ENCODE measurements at regions of chr7 and their contacts with region 1.

Region 1: GRCh38 chr7:117780832-117781231 is 92.4 kb downstream of the CTTNBP2 start:
- DNase-seq: no peak
- H3K4me3 Mint-ChIP-seq: no peak overlapping the region
- H3K27ac Mint-ChIP-seq: no peak overlapping the region
- H3K4me1 Mint-ChIP-seq: peaks cover 8% of the 10 kb centered on the region
- H3K27me3 Mint-ChIP-seq: no peaks in the 10 kb centered on the region
- CTCF ChIP-seq: no peak

Region 2: GRCh38 chr7:117230276-117231046 is 550.4 kb before region 1 on chr7:
- CTCF ChIA-PET with region 1: no interaction called
- intact Hi-C with region 1: no loop called
- DNase-seq: no peak
- H3K4me3 Mint-ChIP-seq: no peak overlapping the region
- H3K27ac Mint-ChIP-seq: no peak overlapping the region
- H3K4me1 Mint-ChIP-seq: no peaks in the 10 kb centered on the region
- H3K27me3 Mint-ChIP-seq: no peaks in the 10 kb centered on the region
- CTCF ChIP-seq: no peak

Region 3: DNA sequence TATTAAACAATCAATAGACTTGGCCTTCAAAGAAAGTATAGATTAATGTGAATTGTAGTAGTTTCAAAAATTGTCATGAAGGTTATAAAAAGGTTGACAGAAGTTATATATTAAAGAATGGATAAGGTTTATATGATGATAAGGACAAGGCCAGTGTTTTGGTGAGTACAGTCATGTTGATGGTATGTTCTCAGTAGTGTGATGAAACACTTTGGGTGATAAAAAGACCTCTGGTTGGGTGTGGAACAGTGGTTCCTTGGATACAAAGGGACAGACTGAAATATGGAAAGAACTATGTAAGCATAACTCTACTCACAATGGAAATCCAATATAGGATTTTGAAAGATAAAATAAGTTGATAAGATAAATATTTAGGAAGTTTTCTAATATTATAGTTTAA is 1310.0 kb after region 1 on chr7:
- CTCF ChIA-PET with region 1: no interaction called
- intact Hi-C with region 1: loop called (anchors 10 kb)
- DNase-seq: no peak
- H3K4me3 Mint-ChIP-seq: no peak overlapping the region
- H3K27ac Mint-ChIP-seq: peak overlapping the region; percentile 57
- H3K4me1 Mint-ChIP-seq: peaks cover 8% of the 10 kb centered on the region
- H3K27me3 Mint-ChIP-seq: no peaks in the 10 kb centered on the region
- CTCF ChIP-seq: no peak

Measured in Calu3 (cell line).